ENCODE measurements at regions of chr9 and their contacts with region 1.

Region 1: DNA sequence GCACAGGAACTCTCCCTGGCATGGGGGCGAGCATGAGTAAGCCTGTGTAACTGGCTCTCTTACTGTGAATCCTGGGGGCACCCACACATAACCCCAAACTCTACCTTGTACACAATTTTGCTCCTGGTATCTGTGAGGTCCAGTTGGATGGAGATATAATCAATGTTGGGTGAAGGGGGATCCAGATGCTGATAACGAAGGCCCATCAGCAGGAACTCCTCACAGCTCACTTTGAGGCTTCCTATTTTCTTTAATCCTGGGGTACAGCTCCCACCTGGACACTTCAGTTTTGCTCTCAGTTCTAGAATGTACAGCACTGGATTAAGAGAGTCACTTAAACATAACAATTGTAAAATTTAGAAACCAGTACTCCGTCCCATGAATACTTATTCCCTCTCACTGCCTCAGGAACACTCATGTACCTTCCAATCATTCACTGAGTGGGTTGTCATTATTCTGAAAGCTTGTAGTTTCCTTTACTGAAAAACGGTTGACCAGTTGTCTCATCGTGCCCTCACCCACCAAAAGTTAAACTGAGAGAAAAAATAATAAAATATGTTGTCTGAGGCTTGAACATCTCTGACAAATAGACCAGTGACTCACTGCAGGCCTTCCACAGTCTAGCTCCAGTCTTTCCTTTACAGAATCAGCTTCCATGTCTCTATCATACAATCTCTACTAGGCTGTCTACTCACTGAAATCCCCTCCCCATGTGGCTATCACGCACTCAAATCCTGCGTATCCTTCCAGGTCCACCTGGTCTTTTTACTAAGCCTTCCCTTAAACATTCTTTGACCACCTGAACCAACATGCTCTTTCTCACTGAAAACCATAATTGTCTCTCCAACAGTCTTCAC is 52.6 kb downstream of the FREM1 start:
- DNase-seq: no peak
- ATAC-seq: no peak
- H3K4me3 ChIP-seq: no peak overlapping the region
- H3K27ac ChIP-seq: no peak overlapping the region
- H3K4me1 ChIP-seq: no peaks in the 10 kb centered on the region
- H3K27me3 ChIP-seq: no peaks in the 10 kb centered on the region
- CTCF ChIP-seq: no peak

Region 2: DNA sequence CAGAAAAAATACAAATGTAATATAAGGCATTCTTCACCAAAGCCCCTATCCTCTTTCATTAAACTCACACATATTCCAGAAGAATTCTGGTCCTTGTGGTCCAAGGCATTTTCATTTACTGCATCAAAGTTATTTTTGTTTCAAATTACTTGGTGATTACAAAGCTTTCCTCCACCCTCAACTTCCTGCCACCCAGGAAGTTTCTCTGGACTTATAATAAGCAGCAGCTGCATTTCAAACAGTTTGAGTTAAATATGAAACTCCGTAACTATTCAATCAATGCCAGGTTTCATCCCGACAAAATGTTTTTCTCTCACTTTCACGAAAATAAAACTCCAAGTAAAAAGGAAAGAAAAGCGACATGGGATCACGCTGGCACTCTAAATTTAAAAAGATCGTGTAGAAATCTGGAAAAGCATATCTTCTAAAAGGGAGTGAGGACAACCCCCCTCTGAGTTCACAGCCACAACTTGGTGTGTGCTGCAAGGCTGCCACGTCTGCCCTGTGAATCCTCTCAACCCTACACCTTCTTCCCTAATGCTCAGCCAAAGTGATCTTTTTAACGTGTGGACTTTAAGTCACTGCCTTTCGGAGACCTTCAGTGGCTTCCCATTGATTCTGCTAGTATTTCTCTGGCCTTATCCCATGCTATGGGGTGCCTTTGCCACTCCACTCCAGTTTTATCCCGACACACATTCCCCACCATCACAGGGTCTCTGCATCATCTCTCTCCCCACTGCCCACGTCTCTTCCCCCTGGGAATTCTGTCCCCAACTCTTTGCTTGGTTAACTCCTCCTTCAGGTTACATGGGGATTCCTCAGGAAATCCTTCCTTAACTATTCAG is 44.1 kb before region 1 on chr9:
- intact Hi-C with region 1: no loop called
- DNase-seq: no peak
- ATAC-seq: no peak
- H3K4me3 ChIP-seq: no peak overlapping the region
- H3K27ac ChIP-seq: peak overlapping the region in 4 of 10 donors; percentile 5 to 35 (median 32)
- H3K4me1 ChIP-seq: peaks cover 0 to 6% (median 0%) of the 10 kb centered on the region in 9 donors
- H3K27me3 ChIP-seq: no peaks in the 10 kb centered on the region
- CTCF ChIP-seq: no peak

Region 3: DNA sequence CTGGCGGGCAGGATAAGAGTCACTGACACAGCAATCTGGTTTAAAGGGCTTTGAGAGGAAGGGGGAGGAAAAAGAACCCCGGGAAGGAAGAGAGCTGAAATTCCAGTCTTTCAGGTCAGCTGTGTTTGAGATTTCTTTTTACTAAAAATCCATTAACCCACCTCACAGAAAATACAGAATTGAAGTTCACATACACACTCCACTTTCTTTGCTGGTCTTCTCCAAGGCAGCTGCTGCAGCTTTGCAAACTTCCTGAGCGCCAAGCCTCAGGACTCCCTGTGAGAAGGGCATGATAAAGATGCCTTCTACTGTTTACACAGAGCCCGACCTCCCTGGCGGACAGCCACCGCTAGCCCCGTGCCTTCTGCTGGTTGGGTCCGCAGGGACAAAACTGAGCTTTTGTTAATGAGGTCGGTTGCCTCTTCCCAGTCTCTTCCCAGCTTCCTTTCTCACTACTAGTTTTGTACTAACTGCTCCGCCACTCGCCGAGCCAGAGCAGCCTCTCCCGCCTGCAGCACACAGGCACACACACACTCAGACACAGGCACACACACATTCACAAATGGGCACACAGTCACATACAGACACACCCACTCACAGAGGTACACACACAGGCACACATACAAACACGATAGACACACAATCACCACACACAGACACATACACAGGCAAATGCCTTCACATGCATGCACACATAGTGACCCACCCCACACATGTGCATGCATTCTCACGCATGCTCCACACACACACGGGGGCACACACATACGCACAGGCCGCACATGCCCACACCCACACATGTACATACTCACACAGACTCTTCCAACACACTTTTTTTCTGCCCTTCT is 52.5 kb after region 1 on chr9 and contains the start of gene FREM1:
- intact Hi-C with region 1: loop called in 1 of 10 experiments (anchors 10 kb)
- DNase-seq: peak; percentile 25 to 52
- ATAC-seq: peak; percentile 33 to 67 (median 52)
- H3K4me3 ChIP-seq: peak within 1 kb of the TSS in 8 of 10 donors; percentile 11 to 46 (median 42)
- H3K27ac ChIP-seq: peak within 1 kb of the TSS in 8 of 10 donors; percentile 0 to 66 (median 42)
- H3K4me1 ChIP-seq: peaks cover 0 to 20% (median 5%) of the 10 kb centered on the region in 9 donors
- H3K27me3 ChIP-seq: no peaks in the 10 kb centered on the region
- CTCF ChIP-seq: no peak
- total RNA-seq, gene FREM1: 1.1 to 5.9 (median 3.2) TPM